ENCODE measurements at regions of chr12 and their contacts with region 1.

Region 1: DNA sequence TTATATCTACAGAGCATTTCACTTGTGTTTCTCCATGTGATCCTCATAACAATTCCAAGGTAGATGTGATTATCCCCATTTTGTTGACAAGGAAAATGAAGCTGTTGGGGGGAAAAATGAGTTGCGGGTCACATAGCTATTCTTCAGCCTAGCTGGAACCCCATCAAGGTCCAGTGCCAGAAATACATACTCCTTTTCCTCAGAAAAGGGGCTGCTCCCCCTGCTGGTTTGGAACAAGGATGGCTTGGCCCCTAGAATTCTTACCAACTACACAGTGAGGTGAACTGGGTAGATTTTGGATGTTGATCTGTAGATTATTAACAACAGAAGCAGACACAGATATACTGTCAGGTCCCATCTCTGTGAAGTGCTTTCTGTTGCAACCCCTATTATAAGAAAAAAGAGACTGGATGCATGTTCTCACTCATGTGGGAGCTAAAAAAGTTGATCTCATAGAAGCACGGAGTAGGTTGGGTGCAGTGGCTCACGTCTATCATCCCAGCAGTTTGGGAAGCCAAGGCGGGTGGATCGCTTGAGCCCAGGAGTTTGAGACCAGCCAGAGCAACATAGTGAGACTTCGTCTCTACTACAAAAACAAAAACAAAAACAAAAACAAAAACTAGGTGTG is 8.9 kb downstream of the IKZF4 start:
- DNase-seq: peak; percentile 64 to 78
- H3K4me3 ChIP-seq: no peak overlapping the region
- H3K4me3 Mint-ChIP-seq: peak overlapping the region; percentile 7
- H3K27ac Mint-ChIP-seq: peak overlapping the region; percentile 67
- H3K4me1 ChIP-seq: peaks cover 16% of the 10 kb centered on the region
- H3K4me1 Mint-ChIP-seq: peaks cover 16% of the 10 kb centered on the region
- H3K27me3 ChIP-seq: no peaks in the 10 kb centered on the region
- H3K27me3 Mint-ChIP-seq: no peaks in the 10 kb centered on the region
- CTCF ChIP-seq: peak; percentile 78 to 86

Region 2: DNA sequence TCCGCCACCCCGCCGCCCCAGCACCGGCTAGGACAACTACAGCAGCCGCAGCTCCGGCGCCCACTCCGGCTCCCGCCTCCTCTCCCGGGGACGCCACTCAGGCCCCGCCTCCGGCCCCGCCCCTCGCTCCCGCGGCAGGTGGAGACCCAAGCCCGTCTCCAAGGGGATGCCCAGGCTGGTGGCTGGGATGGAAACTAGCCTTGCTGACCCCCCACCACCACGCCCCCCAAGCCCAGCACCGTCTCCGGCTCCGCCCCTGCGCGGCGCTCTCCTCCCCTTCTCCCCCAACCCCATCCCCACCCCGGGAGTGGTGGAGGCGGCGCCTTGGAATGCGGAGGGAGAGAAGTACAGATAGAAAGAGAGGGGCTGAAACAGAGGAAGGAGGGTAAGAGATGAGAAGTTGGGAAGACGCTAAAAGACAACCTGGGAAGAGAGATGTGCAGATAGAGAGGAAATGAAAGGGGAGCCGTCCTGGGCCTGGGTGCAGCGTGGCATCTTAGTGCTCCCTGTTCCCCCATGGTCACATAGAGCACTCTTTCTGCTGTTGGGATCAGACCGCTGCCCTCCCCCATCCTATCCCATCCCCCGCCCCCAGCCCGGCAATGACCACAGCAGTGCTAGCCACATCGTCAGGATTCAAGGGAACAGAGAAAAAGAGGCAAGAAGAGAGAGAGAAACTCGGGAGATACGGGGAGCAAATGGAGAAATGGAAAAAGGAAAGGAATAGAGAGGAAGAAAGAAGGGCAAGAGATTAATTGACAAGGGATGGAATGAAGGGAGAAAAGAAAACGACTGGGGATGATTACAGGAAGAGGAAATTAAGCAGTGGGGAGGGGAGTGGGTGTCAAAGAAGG is 321.7 kb before region 1 on chr12 and contains the start of gene ITGA7:
- CTCF ChIA-PET with region 1: no interaction called
- POLR2A ChIA-PET with region 1: interaction called, 12 read pairs
- intact Hi-C with region 1: no loop called
- DNase-seq: peak; percentile 76 to 86
- H3K4me3 ChIP-seq: peak within 1 kb of the TSS; percentile 78
- H3K4me3 Mint-ChIP-seq: peak within 1 kb of the TSS; percentile 78
- H3K27ac Mint-ChIP-seq: no peak within 1 kb of the TSS
- H3K4me1 ChIP-seq: peaks cover 37% of the 10 kb centered on the region
- H3K4me1 Mint-ChIP-seq: peaks cover 18% of the 10 kb centered on the region
- H3K27me3 ChIP-seq: no peaks in the 10 kb centered on the region
- H3K27me3 Mint-ChIP-seq: peaks cover 18% of the 10 kb centered on the region
- CTCF ChIP-seq: no peak
- total RNA-seq, gene ITGA7: 46.1 and 47.0 TPM in 2 replicates

Region 3: DNA sequence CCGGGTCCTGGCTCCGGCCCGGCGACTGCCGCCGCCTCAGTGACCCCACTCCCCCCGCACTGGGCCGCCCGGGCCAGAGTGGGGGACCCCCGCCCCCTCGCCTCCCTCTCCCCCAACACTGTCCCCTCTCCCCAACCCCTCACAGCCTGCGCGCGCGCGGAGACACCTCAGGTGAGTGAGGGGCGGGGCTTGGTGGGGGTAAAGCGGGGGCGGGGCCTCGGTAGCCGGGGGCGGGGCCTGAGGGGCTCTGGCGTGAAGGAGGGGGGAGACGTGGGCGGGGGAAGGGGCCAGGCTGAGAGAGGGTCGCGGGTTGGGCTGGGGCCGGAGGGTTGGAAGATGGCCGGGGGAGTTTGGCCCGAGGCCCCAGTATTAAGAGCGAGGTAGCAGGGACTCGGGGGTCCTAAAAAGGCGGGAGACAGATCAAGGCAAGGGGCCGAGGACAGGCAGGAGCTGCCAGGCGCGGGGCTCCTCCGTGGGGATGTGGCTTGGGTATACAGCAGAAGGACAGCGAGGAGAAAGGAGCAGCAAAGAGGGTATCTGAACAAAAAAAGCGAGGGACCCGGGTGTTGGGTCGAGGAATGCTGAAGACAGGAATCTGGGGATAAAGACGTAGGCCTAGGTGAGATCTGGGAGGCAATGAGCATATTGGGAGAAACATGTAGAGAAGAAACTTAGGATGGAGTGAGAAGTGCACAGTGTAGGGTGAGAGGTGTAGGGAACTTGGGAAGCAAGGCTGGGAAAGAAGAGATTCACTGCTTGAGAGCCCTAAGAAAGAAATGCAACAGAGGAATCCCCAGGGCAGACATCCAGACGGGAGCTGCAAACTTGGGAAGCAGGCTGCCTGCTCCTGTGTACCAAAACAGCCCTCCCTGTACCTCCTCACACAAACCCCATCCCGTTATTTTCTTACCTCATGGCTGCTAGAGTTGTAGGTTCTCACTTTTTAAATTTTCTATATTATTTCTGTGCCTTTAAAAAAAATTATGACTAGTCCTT is 21.9 kb before region 1 on chr12:
- CTCF ChIA-PET with region 1: interaction called, 18 read pairs
- POLR2A ChIA-PET with region 1: interaction called, 5 read pairs
- intact Hi-C with region 1: loop called (anchors 1 kb)
- DNase-seq: peak; percentile 75 to 81
- H3K4me3 ChIP-seq: peak overlapping the region; percentile 52
- H3K4me3 Mint-ChIP-seq: peak overlapping the region; percentile 93
- H3K27ac Mint-ChIP-seq: peak overlapping the region; percentile 82
- H3K4me1 ChIP-seq: peaks cover 54% of the 10 kb centered on the region
- H3K4me1 Mint-ChIP-seq: peaks cover 59% of the 10 kb centered on the region
- H3K27me3 ChIP-seq: no peaks in the 10 kb centered on the region
- H3K27me3 Mint-ChIP-seq: no peaks in the 10 kb centered on the region
- CTCF ChIP-seq: no peak

Region 4: GRCh38 chr12:56014206-56014605 is 15.6 kb before region 1 on chr12:
- CTCF ChIA-PET with region 1: interaction called, 12 read pairs
- POLR2A ChIA-PET with region 1: no interaction called
- intact Hi-C with region 1: loop called (anchors 1 kb)
- DNase-seq: no peak
- H3K4me3 ChIP-seq: no peak overlapping the region
- H3K4me3 Mint-ChIP-seq: no peak overlapping the region
- H3K27ac Mint-ChIP-seq: peak overlapping the region; percentile 80
- H3K4me1 ChIP-seq: peaks cover 67% of the 10 kb centered on the region
- H3K4me1 Mint-ChIP-seq: peaks cover 44% of the 10 kb centered on the region
- H3K27me3 ChIP-seq: no peaks in the 10 kb centered on the region
- H3K27me3 Mint-ChIP-seq: no peaks in the 10 kb centered on the region
- CTCF ChIP-seq: no peak

Region 5: DNA sequence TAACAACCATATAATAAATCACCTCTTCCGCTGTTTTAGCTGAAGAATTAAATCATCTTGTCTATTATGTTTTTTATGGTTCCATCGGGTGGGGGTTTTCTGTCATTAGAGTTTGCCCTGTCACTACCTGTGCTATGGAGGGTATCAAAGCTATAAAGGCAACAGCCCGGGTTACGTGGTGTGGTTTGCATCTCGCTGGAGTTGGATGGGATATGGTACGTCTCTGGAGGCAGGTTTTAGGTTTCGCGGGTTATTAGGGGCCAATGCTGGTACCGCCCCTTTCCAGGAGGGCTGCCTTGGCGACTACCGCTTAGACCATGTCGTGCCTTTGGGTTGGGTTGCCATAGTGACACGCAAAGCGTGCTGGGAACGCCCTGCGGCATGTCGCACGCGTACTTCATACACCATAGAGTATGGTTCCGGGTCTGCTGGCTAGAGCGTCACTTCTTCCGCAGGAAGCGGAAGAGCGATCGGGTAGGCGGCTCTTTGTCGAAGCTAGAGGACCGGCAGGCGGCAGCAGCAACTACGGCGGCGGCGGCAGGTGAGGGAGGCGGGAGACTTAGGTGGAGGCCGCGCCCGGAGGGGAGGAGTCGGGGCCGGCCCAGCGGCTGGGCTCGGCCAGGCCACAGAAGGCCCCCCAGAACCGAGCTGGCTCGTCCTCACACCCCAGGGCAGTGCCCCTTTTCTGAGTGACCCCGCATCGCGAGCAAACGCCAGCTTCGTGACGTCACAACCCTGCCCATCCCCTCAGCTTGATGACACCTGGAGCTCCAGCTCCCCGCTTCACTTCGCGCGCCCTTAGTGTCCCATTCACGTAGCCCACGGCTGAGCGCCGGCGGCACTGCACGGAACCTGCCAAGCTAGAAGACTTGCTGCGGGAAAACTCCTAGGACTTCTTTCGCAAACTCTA is 88.3 kb after region 1 on chr12 and contains the start of gene ZC3H10:
- CTCF ChIA-PET with region 1: no interaction called
- POLR2A ChIA-PET with region 1: no interaction called
- intact Hi-C with region 1: no loop called
- DNase-seq: peak; percentile 98 to 99
- H3K4me3 ChIP-seq: peak within 1 kb of the TSS; percentile 70
- H3K4me3 Mint-ChIP-seq: peak within 1 kb of the TSS; percentile 97
- H3K27ac Mint-ChIP-seq: peak within 1 kb of the TSS; percentile 100
- H3K4me1 ChIP-seq: peaks cover 18% of the 10 kb centered on the region
- H3K4me1 Mint-ChIP-seq: peaks cover 20% of the 10 kb centered on the region
- H3K27me3 ChIP-seq: no peaks in the 10 kb centered on the region
- H3K27me3 Mint-ChIP-seq: peaks cover 2% of the 10 kb centered on the region
- CTCF ChIP-seq: peak in 1 of 2 experiments; percentile 53
- total RNA-seq, gene ZC3H10: 3.5 and 4.4 TPM in 2 replicates